Cardiac septum (tissue), 1 donor: ENCODE measurements at regions of chr16 and their contacts with region 1.

Region 1: DNA sequence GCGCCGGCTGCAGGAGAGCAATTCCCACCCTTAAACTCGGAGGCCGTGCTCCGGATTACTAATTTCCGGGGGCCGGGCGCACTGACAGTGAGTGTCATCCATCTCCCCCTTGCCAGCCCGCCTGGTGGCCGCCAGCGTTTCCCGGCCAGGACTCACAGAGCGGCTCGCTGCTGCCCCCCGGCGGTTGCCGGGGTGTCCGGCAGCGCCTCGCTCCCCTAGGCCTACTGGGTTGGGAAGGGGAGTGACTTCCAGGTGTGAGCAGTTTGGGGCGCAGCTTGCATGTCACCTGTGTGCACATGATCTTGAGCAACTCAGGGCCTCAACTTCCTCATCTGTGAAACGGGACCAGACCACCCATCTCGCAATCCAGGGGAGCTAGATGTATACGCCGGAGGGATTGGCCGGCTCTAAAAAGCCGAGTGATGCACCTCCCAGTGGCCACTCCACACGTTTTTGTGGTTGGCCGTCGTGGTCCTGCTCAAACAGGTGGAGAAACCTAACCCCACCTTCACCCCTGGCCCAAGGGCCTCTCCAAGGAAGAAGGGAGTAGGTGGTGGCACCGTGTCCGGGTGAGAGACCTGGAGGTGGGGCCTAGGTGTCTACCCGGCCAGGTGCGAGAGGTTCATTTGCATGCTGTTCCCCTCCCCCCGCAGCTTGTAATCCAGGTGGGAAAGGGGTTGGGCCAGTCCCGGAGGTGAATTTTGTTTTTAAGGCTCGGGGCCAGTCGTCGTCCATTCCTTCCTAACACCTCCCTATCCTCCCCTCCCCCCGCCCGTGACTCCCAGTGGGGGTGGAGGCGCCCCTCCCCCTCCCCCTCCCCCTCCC is 2.4 kb upstream of the GSE1 start:
- DNase-seq: peak; percentile 94

Region 2: GRCh38 chr16:85321509-85322271 is 289.0 kb before region 1 on chr16:
- intact Hi-C with region 1: loop called (anchors 5 kb)
- DNase-seq: peak; percentile 94

Region 3: DNA sequence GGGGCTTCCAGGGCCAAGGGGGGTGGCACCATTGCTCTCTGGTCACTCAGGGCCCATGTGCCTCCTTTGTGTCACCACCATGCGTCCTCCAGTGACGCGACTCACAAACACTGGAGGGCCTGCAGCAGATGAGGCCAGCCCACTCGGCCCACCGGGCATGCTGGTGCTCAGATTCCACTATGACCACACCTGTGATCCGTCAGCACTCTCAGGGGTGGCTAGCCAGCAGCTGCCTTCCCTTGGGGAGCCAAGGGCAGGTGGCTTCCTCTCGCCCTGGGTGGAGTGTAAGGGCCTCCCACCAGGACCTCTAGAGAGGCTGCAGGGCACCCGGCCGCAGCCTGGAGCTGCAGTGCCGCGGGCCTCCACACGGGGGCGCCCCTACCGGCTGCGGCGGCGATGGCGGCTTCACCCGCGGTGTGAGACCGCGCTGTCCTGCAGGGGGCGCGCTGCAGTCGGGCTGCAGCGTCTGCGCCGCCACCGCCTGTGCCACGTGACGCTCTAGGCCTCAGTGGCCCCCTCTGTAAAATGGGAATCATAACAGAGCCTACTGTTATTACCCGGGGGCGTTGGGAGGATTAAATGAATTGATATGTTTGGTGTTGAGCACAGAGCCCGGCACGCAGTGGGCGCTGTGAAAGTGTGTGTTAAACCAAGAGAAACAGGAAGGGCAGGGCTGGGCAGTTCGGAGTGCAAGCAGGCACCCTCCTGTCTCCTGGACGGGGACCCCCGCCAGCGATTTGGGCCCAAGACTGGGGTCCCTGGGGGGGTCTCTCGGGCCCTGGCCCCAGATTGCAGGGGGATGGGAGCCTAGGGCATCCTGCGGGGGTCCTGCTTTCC is 190.0 kb before region 1 on chr16:
- intact Hi-C with region 1: loop called (anchors 2 kb)
- DNase-seq: peak; percentile 87

Region 4: DNA sequence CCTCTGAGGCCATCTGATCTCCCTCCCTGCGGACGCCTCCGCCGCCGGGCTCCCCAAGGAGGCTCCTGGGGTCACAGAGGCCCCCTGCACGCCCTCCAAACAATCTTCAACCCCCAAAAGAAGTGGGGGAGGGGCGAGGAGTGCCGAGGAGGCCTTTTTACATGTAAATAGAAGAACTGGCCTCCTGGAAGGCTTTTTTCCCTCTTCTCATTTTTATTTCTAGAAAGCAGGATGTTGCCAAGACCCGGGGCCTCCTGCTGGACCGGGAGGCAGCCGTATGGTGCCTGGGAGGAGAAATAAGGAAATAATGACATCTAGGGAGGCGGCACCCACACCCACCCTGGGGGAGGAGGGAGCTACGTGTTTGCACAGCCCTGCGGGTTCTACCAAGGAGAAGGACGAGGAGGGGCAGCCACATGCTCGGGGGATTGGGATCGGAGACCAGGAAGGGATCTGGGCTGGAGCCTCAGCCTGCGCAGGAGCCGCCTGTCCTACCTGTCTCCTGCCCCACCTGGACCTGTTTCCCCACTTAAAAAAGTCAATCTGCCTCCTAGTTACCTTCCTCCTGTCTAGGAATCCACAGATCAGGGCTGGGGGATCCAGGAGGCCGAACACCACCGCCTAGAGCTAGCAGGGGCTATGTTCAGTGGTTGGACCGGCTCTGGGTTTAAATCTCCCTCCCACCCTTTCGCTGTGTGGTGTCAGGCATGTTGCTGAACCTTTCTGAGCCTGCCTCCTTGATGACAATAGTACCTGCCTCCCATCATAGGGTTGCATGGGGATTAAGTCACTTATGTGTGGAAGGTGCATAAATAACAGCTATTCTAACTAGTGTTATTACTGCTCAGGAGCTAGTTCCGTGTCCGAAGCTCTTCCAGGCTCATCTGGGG is 173.3 kb before region 1 on chr16:
- intact Hi-C with region 1: no loop called
- DNase-seq: no peak

Region 5: GRCh38 chr16:85554112-85554813 is 56.5 kb before region 1 on chr16:
- intact Hi-C with region 1: loop called (anchors 2 kb)
- DNase-seq: peak; percentile 92